Vagina (tissue), 2 donors: ENCODE measurements at regions of chr18 and their contacts with region 1.

Region 1: GRCh38 chr18:12657684-12658425 is at the start of gene SPIRE1:
- DNase-seq: no peak
- H3K4me3 ChIP-seq: peak within 1 kb of the TSS; percentile 88 to 93
- H3K27ac ChIP-seq: peak within 1 kb of the TSS; percentile 94
- H3K4me1 ChIP-seq: peaks cover 28% of the 10 kb centered on the region
- H3K27me3 ChIP-seq: no peaks in the 10 kb centered on the region
- CTCF ChIP-seq: no peak
- POLR2A ChIP-seq: peak in 1 of 2 donors; percentile 53
- total RNA-seq, gene SPIRE1: 15.7 TPM

Region 2: GRCh38 chr18:12308386-12309100 is 349.3 kb before region 1 on chr18:
- intact Hi-C with region 1: loop called (anchors 5 kb)
- DNase-seq: no peak
- H3K4me3 ChIP-seq: peak overlapping the region; percentile 67 to 79
- H3K27ac ChIP-seq: peak overlapping the region; percentile 96
- H3K4me1 ChIP-seq: peaks cover 38% of the 10 kb centered on the region
- H3K27me3 ChIP-seq: no peaks in the 10 kb centered on the region
- CTCF ChIP-seq: peak in 1 of 3 experiments; percentile 9
- POLR2A ChIP-seq: peak in 1 of 2 donors; percentile 37

Region 3: GRCh38 chr18:12391618-12392165 is 266.2 kb before region 1 on chr18:
- intact Hi-C with region 1: loop called (anchors 5 kb)
- DNase-seq: no peak
- H3K4me3 ChIP-seq: no peak overlapping the region
- H3K27ac ChIP-seq: no peak overlapping the region
- H3K4me1 ChIP-seq: no peaks in the 10 kb centered on the region
- H3K27me3 ChIP-seq: no peaks in the 10 kb centered on the region
- CTCF ChIP-seq: peak; percentile 82 to 91 (median 83)
- POLR2A ChIP-seq: no peak

Region 4: GRCh38 chr18:12408247-12408869 is 249.5 kb before region 1 on chr18:
- intact Hi-C with region 1: loop called (anchors 5 kb)
- DNase-seq: no peak
- H3K4me3 ChIP-seq: peak overlapping the region; percentile 63 to 75
- H3K27ac ChIP-seq: peak overlapping the region; percentile 86
- H3K4me1 ChIP-seq: peaks cover 12% of the 10 kb centered on the region
- H3K27me3 ChIP-seq: no peaks in the 10 kb centered on the region
- CTCF ChIP-seq: no peak
- POLR2A ChIP-seq: no peak